Posterior cingulate gyrus (tissue), 11 donors: ENCODE measurements at regions of chr2 and their contacts with region 1.

Region 1: GRCh38 chr2:235149736-235150135 is 197.9 kb downstream of the SH3BP4 start:
- DNase-seq: no peak

Region 2: DNA sequence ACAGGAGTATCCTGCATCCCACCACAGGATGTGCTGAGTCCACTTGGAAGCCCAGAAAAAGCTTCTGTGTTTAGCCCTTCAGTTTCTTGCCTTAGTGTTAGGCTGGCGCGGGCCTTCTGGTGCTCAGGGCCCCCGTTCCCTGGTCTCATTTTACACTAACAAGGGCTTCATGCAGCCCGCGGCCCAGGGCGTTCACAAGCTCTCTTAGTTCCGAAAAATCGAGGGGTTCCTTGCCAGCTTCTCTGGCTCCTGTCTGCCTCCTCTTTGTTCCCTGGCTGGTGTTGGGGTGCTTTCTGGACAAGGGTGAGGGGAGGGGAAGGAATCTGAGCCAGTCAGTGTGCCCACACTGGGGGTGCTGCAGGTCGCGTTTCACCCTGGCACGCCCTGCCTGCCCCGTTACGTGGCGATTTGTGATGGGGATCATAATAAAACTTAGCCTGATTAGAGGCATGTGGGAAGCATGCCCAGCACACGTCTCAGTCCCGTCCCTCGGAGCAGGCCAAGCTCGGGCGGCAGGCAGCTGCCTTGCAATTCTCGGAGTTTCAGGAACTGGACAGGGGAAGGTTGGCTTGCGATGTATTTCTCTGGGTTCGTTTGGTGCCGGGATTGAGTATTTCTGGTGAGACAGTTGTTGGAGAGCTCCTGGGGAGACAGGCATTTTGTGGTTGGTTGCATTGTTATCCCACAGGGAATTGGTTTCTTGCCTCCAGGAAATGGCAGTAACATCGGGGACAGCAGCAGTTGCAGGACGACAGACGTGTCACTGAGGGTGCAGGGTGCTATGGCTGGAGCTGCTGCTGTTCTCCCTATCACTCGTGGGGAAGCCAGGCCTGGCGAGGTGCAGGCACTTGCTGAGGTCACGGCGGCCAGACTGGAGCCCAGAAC is 175.0 kb before region 1 on chr2:
- intact Hi-C with region 1: no loop called
- DNase-seq: peak in 4 of 10 donors; percentile 35 to 86 (median 58)

Region 3: GRCh38 chr2:235070063-235070706 is 79.6 kb before region 1 on chr2:
- intact Hi-C with region 1: no loop called
- DNase-seq: no peak

Region 4: GRCh38 chr2:235087812-235088495 is 61.8 kb before region 1 on chr2:
- intact Hi-C with region 1: no loop called
- DNase-seq: peak in 1 of 10 donors; percentile 83

Region 5: GRCh38 chr2:235191978-235192377 is 42.2 kb after region 1 on chr2:
- intact Hi-C with region 1: loop called (anchors 5 kb)
- DNase-seq: peak in 4 of 10 donors; percentile 31 to 90 (median 60)